Activated CD8-positive, alpha-beta T cell treated with anti-CD3 and anti-CD28 coated beads, Interleukin-2, amount 10 ng/mL, durations not matched to agents 7 days and 5 days (primary cell): ENCODE measurements at regions of chr1 and their contacts with region 1.

Region 1: DNA sequence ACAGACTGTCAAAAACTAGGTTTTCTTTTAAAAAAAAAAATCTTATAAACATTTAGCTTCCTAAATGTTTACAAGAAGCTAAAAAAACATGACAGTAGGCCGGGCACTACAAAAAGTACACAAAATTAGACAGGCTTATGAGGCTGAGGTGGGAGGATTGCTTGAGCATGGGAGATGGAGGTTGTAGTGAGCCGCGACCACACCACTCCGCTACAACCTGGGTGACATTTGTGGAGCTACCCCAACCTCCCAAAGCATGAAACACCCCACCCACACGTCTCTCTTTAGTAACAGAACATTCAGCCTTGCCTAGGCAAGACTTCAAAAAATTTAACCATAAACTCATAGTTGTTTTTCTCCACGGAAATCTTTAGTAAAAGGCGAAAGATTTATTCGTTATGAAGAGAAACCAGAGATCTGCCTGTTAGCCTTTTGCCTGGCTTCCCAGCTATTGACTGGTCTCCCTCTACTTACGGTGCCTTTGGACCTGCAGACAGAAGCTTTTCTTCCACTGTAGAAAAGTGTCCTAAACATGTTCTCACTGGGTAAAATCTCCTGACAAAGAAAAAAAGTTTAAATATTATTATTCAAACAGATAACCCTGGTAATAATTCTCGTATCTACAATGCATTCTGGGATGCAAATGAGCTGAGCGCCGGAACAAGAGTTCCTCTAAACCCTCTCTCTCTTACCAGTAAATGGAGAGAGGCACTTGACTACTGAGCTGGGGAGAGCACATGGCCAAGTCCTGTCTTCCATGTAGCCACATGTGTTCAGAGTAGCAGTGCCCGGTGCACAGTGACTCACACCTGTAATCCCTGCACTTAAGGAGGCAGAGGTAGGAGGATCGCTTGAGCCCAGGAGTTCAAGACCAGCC is 9.2 kb downstream of the RNU5D-1 start:
- DNase-seq: peak; percentile 93
- ATAC-seq: peak; percentile 86
- H3K4me3 Mint-ChIP-seq: peak overlapping the region; percentile 52
- H3K27ac Mint-ChIP-seq: peak overlapping the region; percentile 99
- H3K4me1 Mint-ChIP-seq: peaks cover 75% of the 10 kb centered on the region
- H3K27me3 Mint-ChIP-seq: no peaks in the 10 kb centered on the region

Region 2: DNA sequence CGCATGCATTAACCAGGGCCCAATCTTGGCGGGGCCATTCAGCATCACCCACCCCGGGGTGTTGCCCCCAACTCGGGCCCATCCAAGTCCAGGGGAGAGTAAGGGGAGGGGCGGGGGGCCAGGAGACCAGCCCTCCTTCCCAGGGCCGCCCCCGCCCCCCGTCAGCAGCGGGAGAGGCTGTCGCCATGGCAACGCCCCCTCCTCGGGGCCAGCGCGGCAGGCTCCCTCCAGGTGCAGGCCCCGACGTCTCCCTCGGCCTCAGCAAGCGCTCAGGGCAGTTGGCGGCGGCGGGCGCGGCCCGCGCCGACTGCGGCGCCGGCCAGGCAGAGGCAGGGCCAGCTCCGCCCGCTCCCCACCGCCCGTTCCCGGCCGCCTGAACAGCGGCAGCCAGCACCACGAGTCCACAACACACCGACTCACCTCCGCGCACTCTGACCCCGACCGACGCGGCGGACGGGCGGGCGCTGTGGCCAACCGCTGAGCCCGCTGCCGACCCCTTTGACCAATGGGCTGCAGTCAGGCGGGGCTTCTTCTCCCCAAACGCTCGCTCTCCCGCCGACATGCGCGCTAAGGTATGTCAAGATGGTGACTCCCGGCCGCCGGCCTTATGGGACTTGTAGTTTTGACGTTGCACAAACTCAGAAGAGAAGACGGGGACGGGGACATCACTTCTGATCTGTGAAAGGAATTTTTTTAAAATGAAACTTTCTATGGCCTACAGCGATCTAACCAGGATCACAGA is 366.7 kb before region 1 on chr1 and contains the start of gene ERI3:
- CTCF ChIA-PET with region 1: no interaction called
- POLR2A ChIA-PET with region 1: no interaction called
- DNase-seq: peak; percentile 97
- ATAC-seq: peak; percentile 100
- H3K4me3 Mint-ChIP-seq: peak within 1 kb of the TSS; percentile 86
- H3K27ac Mint-ChIP-seq: peak within 1 kb of the TSS; percentile 87
- H3K4me1 Mint-ChIP-seq: peaks cover 29% of the 10 kb centered on the region
- H3K27me3 Mint-ChIP-seq: no peaks in the 10 kb centered on the region
- total RNA-seq, gene ERI3: 33.1 to 33.2 TPM

Region 3: DNA sequence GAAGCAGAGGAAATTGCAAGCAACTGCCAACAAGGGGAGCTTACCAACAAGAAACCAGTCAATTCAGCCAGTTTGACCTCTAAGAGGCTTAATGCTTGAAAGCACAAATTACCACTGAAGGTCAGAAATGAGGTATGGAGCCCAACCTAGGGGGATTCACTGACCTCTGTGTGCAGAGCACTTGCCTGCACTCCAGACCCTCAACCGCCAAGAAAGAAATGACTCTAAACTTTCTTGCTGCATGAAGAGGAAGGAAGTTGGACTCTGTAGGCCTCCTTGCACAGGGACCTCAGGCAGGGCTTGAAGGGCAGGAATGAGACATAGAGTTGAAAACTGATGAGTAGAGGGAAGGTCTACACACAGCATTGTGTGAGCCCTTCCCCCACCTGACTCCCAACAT is 37.2 kb before region 1 on chr1:
- CTCF ChIA-PET with region 1: no interaction called
- POLR2A ChIA-PET with region 1: interaction called, 23 read pairs
- DNase-seq: no peak
- ATAC-seq: peak; percentile 39
- H3K4me3 Mint-ChIP-seq: no peak overlapping the region
- H3K27ac Mint-ChIP-seq: no peak overlapping the region
- H3K4me1 Mint-ChIP-seq: peaks cover 8% of the 10 kb centered on the region
- H3K27me3 Mint-ChIP-seq: peaks cover 2% of the 10 kb centered on the region

Region 4: DNA sequence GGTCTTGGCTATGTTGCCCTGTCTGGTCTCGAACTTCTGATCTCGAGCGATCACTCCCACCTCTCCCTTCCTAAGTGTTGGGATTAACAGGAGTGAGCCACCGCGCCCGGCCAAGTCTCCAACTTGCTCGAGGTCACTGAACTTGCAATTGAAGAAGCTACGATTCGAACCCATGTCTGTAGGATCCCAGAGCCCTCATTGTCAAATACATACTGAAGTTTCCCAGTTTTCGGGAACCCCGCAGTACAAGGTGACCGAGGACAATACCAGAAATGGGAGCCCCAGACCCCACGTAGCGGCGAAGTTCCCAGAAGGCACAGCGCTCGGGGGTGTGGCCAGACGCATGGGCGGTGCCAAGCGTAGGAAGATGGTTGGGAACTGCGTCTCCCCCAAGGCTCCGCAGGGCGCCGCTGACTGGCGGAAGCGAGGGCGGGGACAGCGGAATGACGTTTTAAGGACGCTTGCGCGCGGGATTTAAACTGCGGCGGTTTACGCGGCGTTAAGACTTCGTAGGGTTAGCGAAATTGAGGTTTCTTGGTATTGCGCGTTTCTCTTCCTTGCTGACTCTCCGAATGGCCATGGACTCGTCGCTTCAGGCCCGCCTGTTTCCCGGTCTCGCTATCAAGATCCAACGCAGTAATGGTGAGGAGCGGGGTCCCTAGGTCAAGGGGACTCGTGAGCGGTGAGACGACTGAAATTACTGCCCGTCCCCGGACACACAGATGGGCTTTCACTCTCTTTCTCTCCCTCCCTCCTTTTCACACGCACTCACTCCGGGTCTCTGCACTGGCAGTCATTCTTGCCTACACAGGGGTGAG is 17.8 kb after region 1 on chr1 and contains the start of gene KIF2C:
- CTCF ChIA-PET with region 1: interaction called, 3 read pairs
- POLR2A ChIA-PET with region 1: interaction called, 839 read pairs
- DNase-seq: peak; percentile 98
- ATAC-seq: peak; percentile 99
- H3K4me3 Mint-ChIP-seq: peak within 1 kb of the TSS; percentile 99
- H3K27ac Mint-ChIP-seq: peak within 1 kb of the TSS; percentile 97
- H3K4me1 Mint-ChIP-seq: peaks cover 39% of the 10 kb centered on the region
- H3K27me3 Mint-ChIP-seq: no peaks in the 10 kb centered on the region
- total RNA-seq, gene KIF2C: 125 to 126 TPM

Region 5: GRCh38 chr1:44780583-44781121 is 58.9 kb after region 1 on chr1:
- CTCF ChIA-PET with region 1: interaction called, 3 read pairs
- POLR2A ChIA-PET with region 1: interaction called, 65 read pairs
- DNase-seq: no peak
- ATAC-seq: no peak
- H3K4me3 Mint-ChIP-seq: no peak overlapping the region
- H3K27ac Mint-ChIP-seq: peak overlapping the region; percentile 43
- H3K4me1 Mint-ChIP-seq: peaks cover 56% of the 10 kb centered on the region
- H3K27me3 Mint-ChIP-seq: no peaks in the 10 kb centered on the region

Region 6: DNA sequence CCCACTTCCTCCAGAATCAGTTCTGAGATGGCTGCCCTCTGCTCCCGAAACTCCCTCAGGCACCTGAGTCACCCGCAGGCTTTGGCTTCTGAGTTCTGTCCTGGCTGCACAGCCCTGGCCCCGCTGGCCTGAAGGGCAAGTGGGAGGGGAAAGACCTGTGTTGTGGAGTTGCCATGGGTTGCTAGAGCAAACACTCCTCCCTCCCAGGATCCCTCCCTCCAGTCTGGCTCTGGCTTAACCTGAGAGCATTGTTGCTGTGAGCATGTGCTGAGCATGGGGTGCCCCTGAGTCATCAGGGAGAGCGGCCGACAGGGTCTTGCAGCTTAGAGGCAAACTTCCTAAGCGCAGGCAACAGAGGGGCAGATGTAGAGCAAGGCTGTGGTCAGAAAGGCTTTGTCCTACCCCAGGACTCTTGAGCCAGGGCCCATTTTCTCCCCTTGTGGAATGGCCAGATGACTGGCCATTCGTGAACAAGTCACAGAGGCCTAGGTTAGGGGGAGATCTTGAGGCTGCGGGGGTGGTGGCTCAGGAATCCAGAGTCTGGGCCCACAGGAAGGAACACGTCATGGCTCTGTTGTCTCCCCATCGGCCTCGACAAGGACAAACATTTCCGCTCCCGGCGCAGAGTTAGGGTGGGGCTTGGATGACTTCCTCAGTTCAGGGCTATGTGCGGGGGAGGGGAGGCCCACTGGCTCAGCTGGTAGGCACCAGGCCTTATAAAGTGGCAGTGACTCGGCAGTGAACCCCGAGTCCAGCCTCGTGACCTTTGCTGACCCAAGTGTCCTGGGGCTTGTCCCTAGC is 85.7 kb after region 1 on chr1 and contains the start of gene DYNLT4:
- CTCF ChIA-PET with region 1: no interaction called
- POLR2A ChIA-PET with region 1: interaction called, 135 read pairs
- DNase-seq: peak; percentile 94
- ATAC-seq: peak; percentile 52
- H3K4me3 Mint-ChIP-seq: peak within 1 kb of the TSS; percentile 65
- H3K27ac Mint-ChIP-seq: peak within 1 kb of the TSS; percentile 100
- H3K4me1 Mint-ChIP-seq: peaks cover 86% of the 10 kb centered on the region
- H3K27me3 Mint-ChIP-seq: no peaks in the 10 kb centered on the region
- total RNA-seq, gene DYNLT4: 1.8 to 2.3 TPM

Region 7: GRCh38 chr1:45011837-45012638 is 290.3 kb after region 1 on chr1 and contains the start of gene UROD:
- CTCF ChIA-PET with region 1: no interaction called
- POLR2A ChIA-PET with region 1: interaction called, 65 read pairs
- DNase-seq: peak; percentile 96
- ATAC-seq: peak; percentile 80
- H3K4me3 Mint-ChIP-seq: peak within 1 kb of the TSS; percentile 75
- H3K27ac Mint-ChIP-seq: peak within 1 kb of the TSS; percentile 81
- H3K4me1 Mint-ChIP-seq: peaks cover 42% of the 10 kb centered on the region
- H3K27me3 Mint-ChIP-seq: no peaks in the 10 kb centered on the region
- total RNA-seq, gene UROD: 74.7 to 76.4 TPM